ENCODE measurements at regions of chr1 and their contacts with region 1.

Region 1: DNA sequence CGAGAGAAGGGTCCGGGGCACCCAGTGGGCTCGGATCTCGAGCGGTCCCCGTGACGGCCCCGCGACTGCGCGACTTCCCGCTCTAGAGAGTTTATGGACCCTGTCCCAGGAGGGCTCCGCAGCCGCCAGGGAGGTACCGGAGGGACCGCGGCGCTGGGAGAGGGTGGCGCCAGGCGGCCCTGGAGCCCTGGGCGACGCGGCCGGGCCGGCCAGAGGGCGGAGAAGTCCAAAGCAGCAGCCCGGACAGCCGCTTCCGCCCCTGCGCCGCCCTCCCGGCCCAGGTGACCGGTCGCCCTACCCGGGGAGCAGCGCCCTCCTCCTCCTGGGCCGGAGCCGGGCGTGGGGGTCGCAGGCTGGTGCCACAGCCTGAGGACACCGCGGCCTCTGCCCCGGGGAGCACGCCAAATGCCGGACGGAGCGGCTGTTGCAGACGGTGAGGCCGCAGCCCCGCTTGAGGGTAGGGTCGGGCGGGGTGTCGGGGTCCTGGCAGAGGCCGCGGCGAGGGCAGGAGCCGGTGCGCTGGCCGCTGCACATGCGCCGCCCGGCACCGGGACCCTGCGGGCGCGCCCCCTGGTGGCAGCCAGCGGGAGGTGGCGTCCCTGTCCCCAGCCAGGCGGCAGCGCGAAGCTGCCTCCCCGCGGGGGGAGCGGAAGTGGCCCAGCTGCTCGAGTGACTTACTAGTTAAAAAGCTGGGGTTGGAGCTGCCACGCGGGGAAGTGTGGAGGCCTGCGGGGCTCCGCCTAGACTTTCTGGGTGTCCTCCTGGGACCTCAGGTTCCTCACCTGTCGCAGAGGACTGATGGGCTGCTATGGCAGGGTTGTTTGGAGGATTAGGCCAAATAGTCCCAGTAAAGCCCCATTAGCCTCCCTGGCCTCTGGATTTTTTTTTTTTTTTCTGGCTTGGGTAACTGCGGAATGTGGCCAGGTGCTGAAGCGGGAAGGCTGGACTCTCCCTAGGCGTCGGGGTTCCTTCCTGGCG is 20.9 kb upstream of the ZNF678 start:
- DNase-seq: peak; percentile 93
- CTCF ChIP-seq: peak; percentile 98

Region 2: DNA sequence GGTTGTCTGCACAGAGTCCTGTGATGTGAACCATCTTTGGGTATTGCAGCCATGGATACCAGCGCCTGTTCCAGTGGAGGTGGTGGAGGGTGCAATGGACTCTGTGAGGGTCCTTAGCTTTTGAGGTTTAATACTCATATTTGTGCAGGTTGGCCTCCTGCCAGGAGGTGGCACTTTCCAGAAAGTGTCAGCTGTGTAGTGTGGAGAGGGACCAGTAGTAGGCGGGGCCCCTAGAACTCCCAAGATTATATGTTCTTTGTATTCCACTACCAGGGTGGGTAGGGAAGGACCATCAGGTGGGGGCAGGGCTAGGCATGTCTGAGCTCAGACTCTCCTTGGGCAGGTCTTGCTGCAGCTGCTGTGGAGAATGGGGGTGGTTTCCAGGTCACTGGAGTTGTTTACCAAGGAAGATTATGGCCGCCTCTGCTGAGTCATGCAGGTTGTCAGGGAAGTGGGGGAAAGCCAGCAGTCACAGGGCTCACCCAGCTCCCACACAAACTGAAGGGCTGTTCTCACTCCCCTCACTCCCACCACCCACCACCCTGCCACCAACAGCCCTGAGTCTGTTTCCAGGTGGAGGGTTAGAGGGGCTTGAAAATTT is 10.3 kb before region 1 on chr1:
- CTCF ChIA-PET with region 1: interaction called, 20 read pairs
- POLR2A ChIA-PET with region 1: no interaction called
- DNase-seq: no peak
- CTCF ChIP-seq: no peak

Region 3: DNA sequence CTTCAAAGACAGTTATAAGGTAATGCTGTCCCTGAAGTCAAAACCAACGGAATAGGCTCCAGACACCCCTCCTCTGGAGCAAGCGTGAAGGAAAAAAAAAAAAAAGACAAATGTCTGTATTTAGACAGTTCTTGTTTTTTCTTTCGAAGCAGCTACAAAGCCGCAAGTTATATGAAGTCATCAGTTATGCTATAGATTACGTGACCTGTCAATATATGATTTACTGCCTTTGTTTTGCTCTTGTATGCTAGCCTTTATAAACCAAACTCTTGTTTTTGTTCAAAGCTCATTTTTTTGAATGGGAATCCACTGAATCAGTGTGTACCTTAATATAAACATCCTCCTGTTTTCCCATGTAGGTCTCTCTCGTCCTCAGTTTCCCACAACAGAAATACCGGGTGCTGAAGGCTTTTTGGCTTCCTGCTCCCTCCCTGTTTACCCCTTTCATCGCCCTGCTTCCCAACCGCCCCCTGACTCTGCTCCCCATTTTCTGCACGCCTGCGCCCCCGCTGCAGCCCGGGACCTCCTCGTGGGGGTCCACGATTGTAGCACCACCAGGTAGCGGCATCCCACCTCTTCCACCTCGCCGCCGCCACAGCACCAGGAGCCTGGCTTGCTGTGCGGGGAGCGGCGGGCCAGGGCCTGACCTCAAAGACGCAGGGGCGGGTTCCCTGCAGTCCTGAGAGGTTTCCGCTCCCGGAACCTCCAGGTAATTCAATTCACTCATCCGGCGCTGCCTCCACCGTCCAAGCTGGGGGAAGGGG is 15.7 kb after region 1 on chr1:
- CTCF ChIA-PET with region 1: interaction called, 15 read pairs
- POLR2A ChIA-PET with region 1: no interaction called
- DNase-seq: no peak
- CTCF ChIP-seq: no peak